ENCODE measurements at regions of chr4 and their contacts with region 1.

Region 1: DNA sequence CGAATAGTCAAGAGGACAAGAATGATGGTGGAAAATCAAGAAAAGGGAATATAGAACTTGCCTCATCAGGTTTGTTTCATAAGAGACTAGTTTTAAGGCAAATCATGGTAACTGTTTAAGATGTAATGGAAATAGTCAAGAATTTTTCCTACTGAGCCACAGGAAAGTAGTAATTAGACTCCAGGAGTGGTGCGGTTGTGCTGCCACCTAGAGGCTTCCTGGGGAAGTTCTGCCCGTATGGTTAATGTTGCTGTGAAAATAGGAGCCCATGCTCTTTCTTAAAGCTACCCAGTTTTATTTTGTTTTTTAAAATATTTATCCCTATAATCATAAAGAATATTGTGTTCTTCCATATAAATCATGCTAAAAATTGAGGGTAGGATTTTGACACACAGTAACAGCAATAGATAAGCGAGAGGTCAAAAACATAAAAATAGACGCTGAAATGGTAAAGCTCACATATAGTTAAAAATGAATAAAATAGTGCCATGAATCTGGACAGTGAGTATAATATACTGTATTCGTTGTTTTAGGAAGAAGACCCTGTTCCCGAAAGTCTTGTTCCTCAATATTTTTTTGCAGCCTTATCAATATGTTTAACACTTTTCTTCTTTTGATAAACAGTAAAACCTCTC is 87.0 kb downstream of the PHOX2B start:
- DNase-seq: no peak
- H3K4me3 ChIP-seq: no peak overlapping the region
- H3K27me3 ChIP-seq: no peaks in the 10 kb centered on the region
- CTCF ChIP-seq: peak; percentile 89

Region 2: DNA sequence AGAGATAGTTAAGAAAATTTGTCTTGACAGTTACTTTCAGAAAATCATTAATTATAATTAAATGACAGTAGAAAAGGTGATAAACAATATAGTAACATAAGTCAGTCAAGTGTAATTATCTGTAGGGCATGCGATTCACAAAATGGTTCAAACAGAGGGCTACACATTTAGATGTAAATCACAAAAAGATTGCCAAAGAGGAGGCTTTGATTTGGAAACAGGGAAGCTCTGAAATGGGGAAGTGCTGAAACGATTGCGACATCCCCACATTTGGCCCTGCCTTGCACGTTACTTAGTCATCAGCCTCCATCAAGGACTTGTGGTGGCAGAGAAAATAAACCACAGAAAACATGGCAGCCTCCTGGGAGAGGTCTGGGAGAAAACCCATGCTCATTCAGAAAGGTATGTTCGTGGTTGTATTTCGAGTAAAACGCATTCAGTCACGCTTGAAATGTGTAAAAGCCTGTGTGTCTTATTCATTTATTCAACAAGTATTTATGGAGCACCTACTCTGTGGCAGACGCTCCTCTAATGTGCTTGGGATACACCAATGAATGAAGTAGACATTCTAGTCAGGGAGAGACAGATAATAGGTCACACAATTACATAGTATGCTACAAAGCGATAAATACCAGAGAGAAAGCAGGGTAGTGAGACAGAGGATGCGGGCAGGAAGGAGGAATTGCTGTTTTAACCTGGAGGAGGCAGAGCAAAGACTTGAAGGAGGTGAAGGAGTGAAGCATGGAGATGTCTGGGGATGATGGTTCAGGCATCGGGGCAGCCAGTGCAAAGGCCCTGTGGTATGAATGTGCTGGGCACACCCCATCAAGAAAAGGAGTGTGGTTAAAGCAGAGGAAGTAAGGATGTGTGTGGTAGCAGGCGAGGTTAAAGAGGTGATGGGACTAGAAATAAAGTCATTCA is 1039.7 kb before region 1 on chr4:
- CTCF ChIA-PET with region 1: no interaction called
- POLR2A ChIA-PET with region 1: no interaction called
- DNase-seq: peak; percentile 96
- H3K4me3 ChIP-seq: no peak overlapping the region
- H3K27me3 ChIP-seq: no peaks in the 10 kb centered on the region
- CTCF ChIP-seq: no peak

Region 3: DNA sequence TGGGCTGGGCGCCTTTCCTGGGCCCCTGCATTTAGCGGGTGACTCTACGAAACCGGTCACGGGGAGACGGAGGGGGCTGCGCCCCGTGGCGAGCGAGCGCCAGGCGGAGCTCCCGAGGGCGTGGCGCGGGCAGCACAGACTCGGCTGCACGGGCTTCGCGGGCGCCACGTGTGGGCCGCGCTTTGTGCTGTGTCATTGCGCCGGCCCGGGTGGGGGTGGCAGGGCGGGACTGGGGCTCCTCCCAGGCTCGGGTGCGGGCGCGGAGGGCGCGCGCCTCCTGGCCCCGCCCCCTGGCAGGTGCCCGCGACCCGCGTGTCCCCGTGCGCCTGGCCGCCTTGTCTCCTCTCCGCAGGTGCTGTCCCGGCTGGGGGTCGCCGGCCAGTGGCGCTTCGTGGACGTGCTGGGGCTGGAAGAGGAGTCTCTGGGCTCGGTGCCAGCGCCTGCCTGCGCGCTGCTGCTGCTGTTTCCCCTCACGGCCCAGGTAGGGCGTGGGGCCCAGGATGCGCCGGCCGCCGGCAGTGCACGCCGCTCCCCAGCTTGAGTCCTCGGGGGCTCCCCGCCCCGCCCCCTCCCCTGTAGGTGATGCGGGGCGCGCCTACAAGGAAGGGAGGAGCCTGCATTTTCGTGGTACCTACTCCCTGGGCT is 404.2 kb before region 1 on chr4:
- CTCF ChIA-PET with region 1: interaction called, 10 read pairs
- POLR2A ChIA-PET with region 1: no interaction called
- DNase-seq: no peak
- H3K4me3 ChIP-seq: peak overlapping the region; percentile 88
- H3K27me3 ChIP-seq: peaks cover 3% of the 10 kb centered on the region; the same call in 1 of the 2 replicates
- CTCF ChIP-seq: no peak